IMR-90 (cell line): ENCODE measurements at regions of chr10 and their contacts with region 1.

Region 1: DNA sequence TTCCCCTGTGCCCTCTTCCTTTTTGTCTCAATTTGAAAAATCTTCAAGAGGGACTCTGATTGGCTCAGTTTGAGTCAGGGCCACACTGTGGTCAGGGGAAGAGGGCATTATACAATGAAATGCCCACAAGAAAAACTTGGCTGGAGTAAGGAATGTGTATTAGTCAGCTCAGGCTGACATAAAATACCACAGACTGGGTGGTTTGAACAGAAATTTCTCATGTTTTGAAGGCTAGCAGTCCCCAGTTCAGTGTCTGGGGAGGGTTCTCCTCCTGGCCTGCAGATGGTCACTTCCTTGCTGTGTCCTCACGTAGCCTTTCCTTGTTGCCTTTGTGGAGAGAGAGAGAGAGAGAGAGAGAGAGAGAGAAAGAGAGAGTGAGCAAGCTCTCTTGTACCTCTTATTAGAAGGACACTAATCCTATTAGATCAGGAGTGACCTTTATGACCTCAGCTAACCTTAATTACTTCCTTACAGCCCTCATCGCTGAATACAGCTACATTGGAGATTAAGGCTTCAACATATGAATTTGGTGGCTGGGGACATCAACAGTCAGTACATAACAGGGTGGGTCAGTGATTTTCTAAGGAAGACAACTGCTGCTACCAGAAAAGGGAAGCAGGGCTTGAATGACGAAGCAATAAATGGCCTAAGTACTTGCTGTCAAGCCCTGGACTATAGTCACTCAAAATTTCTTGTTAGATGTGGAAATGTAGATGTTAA is 25.8 kb upstream of the FAM13C start:
- DNase-seq: peak; percentile 90
- ATAC-seq: peak; percentile 84
- H3K4me3 ChIP-seq: no peak overlapping the region
- H3K27ac ChIP-seq: peak overlapping the region; percentile 65; the same call in 1 of the 2 replicates
- H3K4me1 ChIP-seq: peaks cover 12% of the 10 kb centered on the region
- H3K27me3 ChIP-seq: no peaks in the 10 kb centered on the region
- CTCF ChIP-seq: no peak
- POLR2A ChIP-seq: no peak
- RAD21 ChIP-seq: no peak

Region 2: DNA sequence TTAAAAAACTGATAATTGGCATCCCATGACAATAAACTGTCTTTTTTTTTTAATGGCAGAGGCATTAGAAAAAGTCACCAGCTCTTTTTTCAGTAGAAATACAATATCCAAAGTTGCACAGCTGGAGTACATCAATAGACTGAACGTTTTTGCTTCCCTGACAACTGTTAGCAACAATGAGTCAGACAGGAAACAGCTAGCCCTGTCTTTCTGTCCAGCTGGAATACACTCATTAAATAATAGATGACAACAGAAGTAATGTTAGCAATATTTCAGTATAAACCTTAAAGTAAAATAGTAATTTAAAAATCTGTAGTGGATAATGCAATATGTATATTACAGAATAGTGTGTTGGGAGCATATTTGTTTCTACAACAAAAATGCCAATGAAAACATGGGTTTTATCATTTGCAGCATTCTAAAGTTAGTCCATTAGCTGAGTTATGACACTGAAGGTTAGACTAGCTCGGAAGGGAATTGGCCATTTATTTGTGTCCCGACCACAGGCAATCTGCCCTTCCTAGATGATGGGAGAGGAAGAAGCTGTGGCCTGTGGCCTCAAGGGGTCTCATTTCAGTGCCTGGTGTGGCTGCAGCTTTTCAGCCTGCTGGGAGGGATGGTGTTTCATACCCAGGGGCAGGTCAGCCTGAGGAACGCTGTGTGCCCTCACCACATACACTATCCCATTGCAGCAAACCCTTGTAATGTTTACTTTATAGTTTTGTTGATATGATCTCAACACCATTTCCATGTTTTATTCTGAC is 148.2 kb after region 1 on chr10:
- CTCF ChIA-PET with region 1: no interaction called
- POLR2A ChIA-PET with region 1: no interaction called
- dilution Hi-C with region 1: no loop called
- in situ Hi-C with region 1: no loop called
- intact Hi-C with region 1: loop called (anchors 5 kb)
- DNase-seq: peak; percentile 92
- ATAC-seq: peak; percentile 91
- H3K4me3 ChIP-seq: no peak overlapping the region
- H3K27ac ChIP-seq: peak overlapping the region; percentile 90
- H3K4me1 ChIP-seq: peaks cover 4% of the 10 kb centered on the region
- H3K27me3 ChIP-seq: no peaks in the 10 kb centered on the region
- CTCF ChIP-seq: no peak
- POLR2A ChIP-seq: no peak
- RAD21 ChIP-seq: no peak

Region 3: DNA sequence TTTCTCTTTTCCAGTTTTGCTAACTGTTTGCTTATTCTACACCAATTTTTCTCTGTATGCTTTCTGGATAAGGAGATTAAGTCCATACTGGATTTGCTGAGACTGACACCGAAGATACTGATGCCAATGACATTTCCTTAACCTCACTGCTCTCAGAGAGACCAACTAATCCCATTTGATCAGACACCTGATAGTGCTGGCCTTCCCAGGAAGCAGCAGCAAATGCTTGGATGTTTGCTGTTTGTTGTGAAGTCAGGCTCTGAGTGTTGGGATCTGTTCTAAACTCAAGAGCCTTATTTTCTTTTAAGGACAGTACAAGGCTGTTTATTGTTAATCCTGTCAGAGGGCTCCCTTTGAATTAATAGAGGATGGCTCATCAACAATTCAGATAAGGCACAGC is 858.3 kb after region 1 on chr10:
- CTCF ChIA-PET with region 1: no interaction called
- POLR2A ChIA-PET with region 1: no interaction called
- dilution Hi-C with region 1: no loop called
- in situ Hi-C with region 1: no loop called
- intact Hi-C with region 1: no loop called
- DNase-seq: no peak
- ATAC-seq: no peak
- H3K4me3 ChIP-seq: no peak overlapping the region
- H3K27ac ChIP-seq: no peak overlapping the region
- H3K4me1 ChIP-seq: no peaks in the 10 kb centered on the region
- H3K27me3 ChIP-seq: peaks cover 2% of the 10 kb centered on the region; the same call in 1 of the 2 replicates
- CTCF ChIP-seq: no peak
- POLR2A ChIP-seq: no peak
- RAD21 ChIP-seq: no peak